B cell (primary cell): ENCODE measurements at regions of chr5 and their contacts with region 1.

Region 1: GRCh38 chr5:156934450-156935211 is 28.4 kb downstream of the TIMD4 start:
- DNase-seq: peak; percentile 60
- ATAC-seq: no peak
- H3K4me3 ChIP-seq: no peak overlapping the region
- H3K4me3 Mint-ChIP-seq: no peak overlapping the region
- H3K27ac ChIP-seq: no peak overlapping the region
- H3K27ac Mint-ChIP-seq: no peak overlapping the region
- H3K4me1 ChIP-seq: no peaks in the 10 kb centered on the region
- H3K4me1 Mint-ChIP-seq: peaks cover 7% of the 10 kb centered on the region
- H3K27me3 ChIP-seq: no peaks in the 10 kb centered on the region
- H3K27me3 Mint-ChIP-seq: peaks cover 2% of the 10 kb centered on the region
- CTCF ChIP-seq: peak; percentile 83

Region 2: GRCh38 chr5:154940772-154941620 is 1993.6 kb before region 1 on chr5 and contains the start of gene MRPL22:
- CTCF ChIA-PET with region 1: interaction called, 3 read pairs
- POLR2A ChIA-PET with region 1: no interaction called
- intact Hi-C with region 1: loop called (anchors 5 kb)
- DNase-seq: peak; percentile 97
- ATAC-seq: peak; percentile 67
- H3K4me3 ChIP-seq: peak within 1 kb of the TSS; percentile 57 to 94 (median 77)
- H3K4me3 Mint-ChIP-seq: peak within 1 kb of the TSS; percentile 99
- H3K27ac ChIP-seq: peak within 1 kb of the TSS; percentile 56 to 88
- H3K27ac Mint-ChIP-seq: peak within 1 kb of the TSS; percentile 93
- H3K4me1 ChIP-seq: peaks cover 27 to 32% of the 10 kb centered on the region in 2 donors
- H3K4me1 Mint-ChIP-seq: peaks cover 51% of the 10 kb centered on the region
- H3K27me3 ChIP-seq: no peaks in the 10 kb centered on the region
- H3K27me3 Mint-ChIP-seq: no peaks in the 10 kb centered on the region
- CTCF ChIP-seq: no peak
- total RNA-seq, gene MRPL22: 21.4 and 32.5 TPM in 2 replicates

Region 3: DNA sequence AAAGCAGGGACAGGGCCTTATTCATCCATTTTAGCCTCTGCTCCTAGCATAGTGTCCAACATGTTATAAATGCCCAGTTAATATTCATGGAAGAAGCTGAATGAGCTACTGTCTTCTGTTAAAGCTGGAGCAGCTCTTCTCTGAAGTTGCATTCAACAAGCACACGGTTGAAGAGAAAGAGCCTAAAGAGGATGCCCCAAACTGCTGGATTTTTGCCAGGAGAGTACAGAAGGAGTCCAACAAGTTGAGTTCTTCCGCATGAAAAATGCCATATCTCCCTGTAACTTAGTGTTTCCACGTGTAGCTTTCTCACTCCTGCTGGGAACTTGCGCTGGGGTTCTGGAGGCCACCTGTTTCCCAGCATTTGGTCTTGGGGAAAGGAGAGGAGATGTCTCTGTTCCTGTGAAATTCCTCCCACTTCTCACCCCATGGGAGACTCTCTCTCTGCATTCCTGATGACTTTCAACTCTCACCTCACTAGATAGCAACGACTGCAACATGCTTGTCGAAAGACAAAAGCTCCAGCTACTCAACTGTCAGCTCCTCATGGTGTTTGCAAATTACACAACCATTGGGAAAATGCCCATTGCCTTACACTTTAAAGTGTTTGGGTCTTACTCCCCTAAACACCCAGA is 1798.3 kb before region 1 on chr5:
- CTCF ChIA-PET with region 1: no interaction called
- POLR2A ChIA-PET with region 1: no interaction called
- intact Hi-C with region 1: loop called (anchors 2 kb)
- DNase-seq: no peak
- ATAC-seq: no peak
- H3K4me3 ChIP-seq: no peak overlapping the region
- H3K4me3 Mint-ChIP-seq: no peak overlapping the region
- H3K27ac ChIP-seq: no peak overlapping the region
- H3K27ac Mint-ChIP-seq: no peak overlapping the region
- H3K4me1 ChIP-seq: no peaks in the 10 kb centered on the region
- H3K4me1 Mint-ChIP-seq: no peaks in the 10 kb centered on the region
- H3K27me3 ChIP-seq: peaks cover 0 to 7% (median 5%) of the 10 kb centered on the region in 4 experiments
- H3K27me3 Mint-ChIP-seq: peaks cover 49% of the 10 kb centered on the region
- CTCF ChIP-seq: no peak

Region 4: GRCh38 chr5:155943516-155944407 is 990.9 kb before region 1 on chr5:
- CTCF ChIA-PET with region 1: interaction called, 4 read pairs
- POLR2A ChIA-PET with region 1: no interaction called
- intact Hi-C with region 1: loop called (anchors 10 kb)
- DNase-seq: peak; percentile 16
- ATAC-seq: no peak
- H3K4me3 ChIP-seq: no peak overlapping the region
- H3K4me3 Mint-ChIP-seq: no peak overlapping the region
- H3K27ac ChIP-seq: no peak overlapping the region
- H3K27ac Mint-ChIP-seq: no peak overlapping the region
- H3K4me1 ChIP-seq: no peaks in the 10 kb centered on the region
- H3K4me1 Mint-ChIP-seq: peaks cover 5% of the 10 kb centered on the region
- H3K27me3 ChIP-seq: no peaks in the 10 kb centered on the region
- H3K27me3 Mint-ChIP-seq: peaks cover 9% of the 10 kb centered on the region
- CTCF ChIP-seq: peak; percentile 16

Region 5: DNA sequence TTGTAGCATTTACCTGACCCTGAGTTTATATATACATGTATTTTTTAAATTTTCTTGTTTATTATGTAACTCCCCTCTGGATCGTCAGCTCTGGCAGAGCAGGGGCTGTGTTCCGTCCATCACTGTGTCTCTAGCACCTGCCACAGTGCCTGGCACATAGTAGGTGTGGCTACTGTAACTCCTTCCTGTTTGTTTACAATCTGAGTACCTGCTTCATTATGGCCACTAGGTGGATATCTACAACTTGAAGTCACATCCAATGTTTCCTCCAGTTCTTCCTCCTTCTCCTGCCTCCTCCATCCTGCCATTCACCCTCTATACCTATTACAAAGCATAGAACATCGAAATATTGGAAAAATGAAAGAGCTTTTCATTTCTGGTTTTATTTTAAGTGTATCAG is 98.7 kb before region 1 on chr5:
- CTCF ChIA-PET with region 1: no interaction called
- POLR2A ChIA-PET with region 1: no interaction called
- intact Hi-C with region 1: no loop called
- DNase-seq: peak; percentile 13
- ATAC-seq: no peak
- H3K4me3 ChIP-seq: no peak overlapping the region
- H3K4me3 Mint-ChIP-seq: no peak overlapping the region
- H3K27ac ChIP-seq: no peak overlapping the region
- H3K27ac Mint-ChIP-seq: no peak overlapping the region
- H3K4me1 ChIP-seq: no peaks in the 10 kb centered on the region
- H3K4me1 Mint-ChIP-seq: no peaks in the 10 kb centered on the region
- H3K27me3 ChIP-seq: peaks cover 0 to 2% (median 1%) of the 10 kb centered on the region in 4 experiments
- H3K27me3 Mint-ChIP-seq: peaks cover 17% of the 10 kb centered on the region
- CTCF ChIP-seq: peak; percentile 15

Region 6: DNA sequence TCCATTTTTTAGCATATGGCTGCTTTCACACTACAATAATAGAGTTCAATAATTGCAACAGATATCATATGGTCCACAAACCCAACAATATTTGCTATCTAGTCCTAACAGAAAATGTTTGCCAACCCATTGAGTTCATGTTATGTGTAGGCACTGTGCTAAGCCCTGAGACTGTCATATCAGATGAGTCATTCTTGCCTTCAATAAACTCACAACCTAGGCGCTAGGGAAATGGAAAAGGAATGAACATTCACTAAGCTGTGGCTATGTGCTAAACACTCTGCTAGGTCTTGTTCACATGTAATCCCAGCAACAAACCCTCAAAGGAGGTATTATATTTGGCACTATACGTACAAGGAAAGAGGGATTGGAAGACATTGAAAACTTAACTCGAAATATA is 36.8 kb after region 1 on chr5:
- CTCF ChIA-PET with region 1: no interaction called
- POLR2A ChIA-PET with region 1: no interaction called
- intact Hi-C with region 1: no loop called
- DNase-seq: no peak
- ATAC-seq: no peak
- H3K4me3 ChIP-seq: no peak overlapping the region
- H3K4me3 Mint-ChIP-seq: no peak overlapping the region
- H3K27ac ChIP-seq: no peak overlapping the region
- H3K27ac Mint-ChIP-seq: no peak overlapping the region
- H3K4me1 ChIP-seq: no peaks in the 10 kb centered on the region
- H3K4me1 Mint-ChIP-seq: peaks cover 2% of the 10 kb centered on the region
- H3K27me3 ChIP-seq: peaks cover 0 to 3% (median 0%) of the 10 kb centered on the region in 4 experiments
- H3K27me3 Mint-ChIP-seq: peaks cover 17% of the 10 kb centered on the region
- CTCF ChIP-seq: no peak

Region 7: DNA sequence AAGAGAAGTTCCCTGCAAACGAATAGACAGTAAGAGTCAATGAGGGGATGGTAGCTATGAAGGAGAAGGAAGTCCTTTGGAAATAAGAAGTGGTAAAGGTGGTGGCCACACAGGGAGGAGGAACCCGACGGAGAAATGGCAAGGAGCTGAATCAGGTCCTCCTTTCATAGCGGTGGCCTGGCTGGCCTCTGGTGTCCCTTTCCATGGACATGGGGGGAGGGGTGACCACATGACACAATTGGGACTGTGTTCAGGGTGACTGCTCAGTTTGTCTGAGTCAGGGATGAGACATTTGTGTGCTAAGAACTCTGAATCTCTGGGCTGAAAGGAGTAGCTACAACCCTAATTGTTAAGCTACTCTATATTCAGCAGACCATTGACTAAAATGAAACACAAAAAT is 57.1 kb after region 1 on chr5:
- CTCF ChIA-PET with region 1: no interaction called
- POLR2A ChIA-PET with region 1: no interaction called
- intact Hi-C with region 1: no loop called
- DNase-seq: no peak
- ATAC-seq: no peak
- H3K4me3 ChIP-seq: no peak overlapping the region
- H3K4me3 Mint-ChIP-seq: no peak overlapping the region
- H3K27ac ChIP-seq: no peak overlapping the region
- H3K27ac Mint-ChIP-seq: no peak overlapping the region
- H3K4me1 ChIP-seq: no peaks in the 10 kb centered on the region
- H3K4me1 Mint-ChIP-seq: no peaks in the 10 kb centered on the region
- H3K27me3 ChIP-seq: no peaks in the 10 kb centered on the region
- H3K27me3 Mint-ChIP-seq: peaks cover 13% of the 10 kb centered on the region
- CTCF ChIP-seq: no peak

Region 8: DNA sequence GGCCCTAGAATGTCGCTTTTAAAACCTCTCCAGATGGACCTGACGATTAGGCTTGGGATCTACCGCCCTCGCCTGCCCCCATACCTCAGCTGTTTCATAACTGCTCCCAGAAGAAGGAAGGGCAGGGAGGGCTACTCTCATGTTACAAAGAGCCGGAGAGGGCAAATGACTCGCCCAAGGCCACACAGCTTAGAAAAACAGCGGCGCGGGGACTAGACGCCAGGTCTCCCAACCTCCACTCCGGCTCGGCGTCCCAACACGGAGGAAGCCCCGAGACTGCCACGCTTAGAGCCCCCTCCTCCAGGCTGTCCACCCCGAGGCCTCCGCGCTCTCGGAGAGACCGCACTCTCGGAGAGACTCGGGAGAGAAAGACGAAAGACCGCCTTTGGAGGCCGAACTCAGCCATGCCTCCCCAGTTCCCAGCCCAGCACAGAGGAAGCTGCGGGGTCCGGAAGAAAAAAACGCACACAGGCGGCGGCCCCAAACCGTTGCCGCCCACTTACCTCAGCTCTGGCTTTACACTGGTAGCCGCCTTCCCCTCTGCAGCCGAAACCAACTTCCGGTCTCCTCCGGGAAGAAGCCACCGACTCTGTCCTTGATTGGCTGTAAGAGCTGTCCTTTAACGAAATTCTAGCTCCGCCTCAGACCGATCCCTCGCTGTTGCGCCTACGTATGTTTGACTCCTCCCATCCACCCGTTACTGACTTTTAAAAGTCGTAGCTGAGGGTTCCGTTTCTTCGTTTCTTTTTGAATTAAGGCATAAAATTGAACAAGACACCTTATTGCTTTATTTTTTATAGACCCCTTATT is 207.9 kb after region 1 on chr5 and contains the start of gene MED7:
- CTCF ChIA-PET with region 1: no interaction called
- POLR2A ChIA-PET with region 1: no interaction called
- intact Hi-C with region 1: no loop called
- DNase-seq: peak; percentile 98
- ATAC-seq: peak; percentile 96
- H3K4me3 ChIP-seq: peak within 1 kb of the TSS; percentile 76 to 99 (median 97)
- H3K4me3 Mint-ChIP-seq: peak within 1 kb of the TSS; percentile 99
- H3K27ac ChIP-seq: peak within 1 kb of the TSS; percentile 95 to 96
- H3K27ac Mint-ChIP-seq: peak within 1 kb of the TSS; percentile 99
- H3K4me1 ChIP-seq: peaks cover 15 to 18% of the 10 kb centered on the region in 2 donors
- H3K4me1 Mint-ChIP-seq: peaks cover 28% of the 10 kb centered on the region
- H3K27me3 ChIP-seq: no peaks in the 10 kb centered on the region
- H3K27me3 Mint-ChIP-seq: no peaks in the 10 kb centered on the region
- CTCF ChIP-seq: no peak
- total RNA-seq, gene MED7: 19.3 and 21.4 TPM in 2 replicates